OCI-LY7 (cell line): ENCODE measurements at regions of chr1 and their contacts with region 1.

Region 1: DNA sequence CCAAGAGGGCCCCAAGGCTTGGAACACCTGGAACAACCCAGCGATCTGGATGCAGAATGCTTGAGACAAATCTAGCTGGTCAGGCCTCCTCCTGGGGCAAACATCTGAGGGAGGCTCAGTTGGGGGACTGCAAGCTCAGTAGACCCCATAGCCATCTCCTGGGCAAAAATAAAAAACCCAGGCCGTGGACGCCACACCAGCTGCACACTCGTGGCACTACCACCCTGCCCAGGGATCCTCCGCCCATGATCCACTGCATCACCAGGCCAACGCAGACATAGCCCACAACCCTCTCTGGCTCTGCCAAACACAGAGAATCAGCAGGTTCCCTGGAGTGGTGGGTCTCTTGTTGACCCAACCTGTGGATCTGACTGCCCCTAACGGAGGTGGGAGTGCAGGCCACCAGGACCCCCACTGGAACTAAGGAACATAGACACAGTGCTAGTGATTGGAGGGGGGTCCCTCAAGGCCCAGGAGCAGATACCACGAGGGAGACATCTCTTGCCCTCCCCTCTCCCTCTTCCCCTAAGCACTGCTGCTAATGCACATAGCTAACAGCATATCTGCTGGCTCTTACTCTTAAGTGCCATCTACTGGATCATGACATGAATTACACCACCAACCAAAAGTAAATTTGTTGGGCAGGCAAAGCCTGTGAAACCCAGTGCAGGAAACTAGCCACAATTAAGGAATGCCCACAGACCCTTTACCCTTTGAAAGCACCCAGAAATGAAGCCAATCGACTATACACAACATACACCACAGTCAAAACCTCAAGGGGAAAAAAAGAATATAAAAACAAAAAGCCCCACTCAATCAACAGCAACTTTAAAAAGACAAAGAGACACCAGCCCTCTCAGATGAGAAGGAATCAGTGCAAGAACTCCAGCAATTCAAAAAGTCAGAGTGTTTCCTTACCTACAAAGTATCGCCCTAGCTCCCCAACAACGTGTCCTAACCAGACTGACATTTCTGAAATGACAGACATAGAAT is 147.3 kb downstream of the CHD1L start:
- DNase-seq: peak; percentile 57
- H3K4me3 ChIP-seq: no peak overlapping the region
- H3K27ac ChIP-seq: no peak overlapping the region
- H3K4me1 ChIP-seq: no peaks in the 10 kb centered on the region
- CTCF ChIP-seq: peak; percentile 84

Region 2: GRCh38 chr1:147273409-147274336 is 116.2 kb before region 1 on chr1:
- CTCF ChIA-PET with region 1: no interaction called
- POLR2A ChIA-PET with region 1: no interaction called
- intact Hi-C with region 1: loop called (anchors 5 kb)
- DNase-seq: peak; percentile 69
- H3K4me3 ChIP-seq: no peak overlapping the region
- H3K27ac ChIP-seq: no peak overlapping the region
- H3K4me1 ChIP-seq: no peaks in the 10 kb centered on the region
- CTCF ChIP-seq: peak; percentile 90

Region 3: DNA sequence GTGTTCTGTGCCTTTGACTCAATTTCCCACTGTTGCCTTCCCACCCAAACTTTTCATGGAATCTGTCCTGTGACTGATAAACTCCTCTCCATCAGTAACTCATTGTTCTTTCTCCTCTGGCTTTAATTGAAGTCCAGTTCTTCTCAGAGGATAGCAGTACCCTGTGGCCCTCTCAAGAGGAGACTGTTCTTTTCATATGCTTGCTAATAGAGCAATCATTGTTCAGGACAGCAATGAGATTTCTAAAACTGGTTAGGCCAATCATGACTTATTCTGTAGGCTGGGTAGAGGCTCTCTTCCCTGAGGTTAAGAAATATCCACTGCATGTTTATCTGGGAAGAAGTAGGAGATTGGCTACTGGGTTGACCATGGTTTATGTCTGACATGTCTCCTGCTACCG is 48.6 kb before region 1 on chr1:
- CTCF ChIA-PET with region 1: no interaction called
- POLR2A ChIA-PET with region 1: no interaction called
- intact Hi-C with region 1: loop called (anchors 2 kb)
- DNase-seq: no peak
- H3K4me3 ChIP-seq: no peak overlapping the region
- H3K27ac ChIP-seq: no peak overlapping the region
- H3K4me1 ChIP-seq: no peaks in the 10 kb centered on the region
- CTCF ChIP-seq: no peak